Activated CD8-positive, alpha-beta T cell treated with anti-CD3 and anti-CD28 coated beads, Interleukin-2, amount 10 ng/mL, durations not matched to agents 7 days and 5 days (primary cell): ENCODE measurements at regions of chr2 and their contacts with region 1.

Region 1: GRCh38 chr2:70301344-70302194 is at the start of gene FAM136A:
- DNase-seq: peak; percentile 90
- ATAC-seq: peak; percentile 89
- H3K4me3 Mint-ChIP-seq: peak within 1 kb of the TSS; percentile 94
- H3K27ac Mint-ChIP-seq: peak within 1 kb of the TSS; percentile 98
- H3K4me1 Mint-ChIP-seq: peaks cover 41% of the 10 kb centered on the region
- H3K27me3 Mint-ChIP-seq: no peaks in the 10 kb centered on the region
- total RNA-seq, gene FAM136A: 45.5 to 51.0 TPM

Region 2: DNA sequence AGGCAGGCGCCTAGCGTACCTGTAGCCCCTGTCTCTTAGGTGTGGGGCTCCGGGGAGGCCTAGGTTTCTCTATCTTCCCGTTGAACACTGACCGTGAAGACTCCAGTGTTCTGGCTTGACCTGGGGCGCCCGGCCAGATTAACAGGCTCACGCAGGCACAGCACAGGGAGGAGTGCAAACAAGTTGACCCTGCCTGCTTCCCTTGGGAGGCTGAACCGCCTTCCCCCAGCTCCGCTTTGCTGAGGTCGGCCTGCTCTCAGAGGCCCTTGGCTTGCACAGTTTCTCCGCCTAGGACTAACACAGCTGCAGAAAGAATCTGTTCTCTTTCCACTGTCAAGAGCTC is 43.1 kb before region 1 on chr2:
- CTCF ChIA-PET with region 1: interaction called, 23 read pairs
- POLR2A ChIA-PET with region 1: interaction called, 6 read pairs
- DNase-seq: peak; percentile 26
- ATAC-seq: no peak
- H3K4me3 Mint-ChIP-seq: peak overlapping the region; percentile 79
- H3K27ac Mint-ChIP-seq: no peak overlapping the region
- H3K4me1 Mint-ChIP-seq: peaks cover 36% of the 10 kb centered on the region
- H3K27me3 Mint-ChIP-seq: no peaks in the 10 kb centered on the region

Region 3: GRCh38 chr2:70321370-70321769 is 19.8 kb after region 1 on chr2:
- CTCF ChIA-PET with region 1: interaction called, 13 read pairs
- POLR2A ChIA-PET with region 1: no interaction called
- DNase-seq: no peak
- ATAC-seq: no peak
- H3K4me3 Mint-ChIP-seq: no peak overlapping the region
- H3K27ac Mint-ChIP-seq: no peak overlapping the region
- H3K4me1 Mint-ChIP-seq: no peaks in the 10 kb centered on the region
- H3K27me3 Mint-ChIP-seq: peaks cover 27% of the 10 kb centered on the region

Region 4: DNA sequence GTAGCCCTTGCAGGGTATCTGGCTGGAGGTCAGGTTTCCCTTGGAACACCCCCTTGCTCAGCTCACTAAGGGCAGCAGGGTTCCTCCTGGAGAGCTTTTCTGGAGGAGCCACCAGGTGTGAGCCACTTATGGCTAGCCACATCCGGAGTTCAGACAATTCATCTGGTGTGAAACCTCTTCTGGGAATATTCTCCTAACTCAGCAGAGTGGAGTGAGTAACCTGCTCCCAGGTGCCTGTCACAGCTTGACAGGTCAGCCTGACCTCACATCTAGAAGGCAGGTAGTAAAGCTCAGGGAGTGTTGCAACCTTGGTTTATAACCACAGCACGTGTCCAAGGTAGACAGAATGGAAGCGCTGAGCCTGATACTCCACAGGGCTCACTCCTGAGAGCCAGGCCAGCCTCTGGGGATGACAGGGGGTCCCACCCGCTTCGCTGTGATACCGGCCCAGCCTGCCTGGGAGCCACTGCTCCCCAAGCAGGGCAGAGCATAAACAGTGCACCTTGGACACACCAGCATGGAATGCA is 314.7 kb after region 1 on chr2:
- CTCF ChIA-PET with region 1: interaction called, 79 read pairs
- POLR2A ChIA-PET with region 1: no interaction called
- DNase-seq: no peak
- ATAC-seq: no peak
- H3K4me3 Mint-ChIP-seq: no peak overlapping the region
- H3K27ac Mint-ChIP-seq: no peak overlapping the region
- H3K4me1 Mint-ChIP-seq: peaks cover 5% of the 10 kb centered on the region
- H3K27me3 Mint-ChIP-seq: peaks cover 16% of the 10 kb centered on the region

Region 5: DNA sequence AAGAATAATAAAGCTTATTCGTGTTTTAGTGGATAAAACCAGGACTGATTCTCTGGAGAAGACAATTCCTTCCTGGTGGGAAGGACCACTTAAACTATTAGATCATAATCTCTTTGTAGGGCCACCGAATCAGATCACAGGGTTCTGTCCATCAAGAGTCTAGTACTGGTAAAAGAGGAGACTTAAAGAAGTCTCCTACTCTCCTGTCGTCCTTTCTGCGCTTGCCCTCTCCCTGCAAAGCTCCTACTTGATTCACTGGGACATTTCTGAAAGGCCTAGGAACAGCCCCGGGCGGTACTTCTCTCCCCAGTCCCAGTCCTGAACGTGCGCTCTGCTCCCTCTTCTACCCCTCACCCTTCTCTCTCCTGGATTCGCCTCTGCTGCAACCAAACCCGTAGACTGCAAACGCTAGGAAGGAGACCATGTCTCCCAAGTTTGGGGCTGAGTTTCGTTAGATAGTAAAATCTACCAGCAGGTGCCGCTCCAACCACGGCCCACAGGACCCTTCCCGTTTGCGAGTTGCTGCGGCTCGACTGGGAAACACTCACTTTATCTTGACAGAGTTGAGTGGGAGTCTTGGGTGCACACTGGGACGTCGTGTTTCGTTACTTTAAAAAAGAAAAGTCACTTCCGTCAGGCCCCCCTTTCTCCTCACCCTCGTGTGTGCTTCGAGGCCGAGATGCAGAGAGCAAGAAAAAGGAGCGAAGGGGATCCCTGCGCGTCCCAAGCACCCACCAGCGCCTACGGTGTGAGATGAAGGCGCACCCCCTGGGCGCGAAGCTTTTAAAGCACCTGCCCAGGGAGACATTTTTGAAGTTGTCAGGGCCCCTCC is 488.0 kb after region 1 on chr2:
- CTCF ChIA-PET with region 1: interaction called, 14 read pairs
- POLR2A ChIA-PET with region 1: no interaction called
- DNase-seq: peak; percentile 79
- ATAC-seq: peak; percentile 91
- H3K4me3 Mint-ChIP-seq: peak overlapping the region; percentile 65
- H3K27ac Mint-ChIP-seq: no peak overlapping the region
- H3K4me1 Mint-ChIP-seq: peaks cover 5% of the 10 kb centered on the region
- H3K27me3 Mint-ChIP-seq: peaks cover 50% of the 10 kb centered on the region

Region 6: DNA sequence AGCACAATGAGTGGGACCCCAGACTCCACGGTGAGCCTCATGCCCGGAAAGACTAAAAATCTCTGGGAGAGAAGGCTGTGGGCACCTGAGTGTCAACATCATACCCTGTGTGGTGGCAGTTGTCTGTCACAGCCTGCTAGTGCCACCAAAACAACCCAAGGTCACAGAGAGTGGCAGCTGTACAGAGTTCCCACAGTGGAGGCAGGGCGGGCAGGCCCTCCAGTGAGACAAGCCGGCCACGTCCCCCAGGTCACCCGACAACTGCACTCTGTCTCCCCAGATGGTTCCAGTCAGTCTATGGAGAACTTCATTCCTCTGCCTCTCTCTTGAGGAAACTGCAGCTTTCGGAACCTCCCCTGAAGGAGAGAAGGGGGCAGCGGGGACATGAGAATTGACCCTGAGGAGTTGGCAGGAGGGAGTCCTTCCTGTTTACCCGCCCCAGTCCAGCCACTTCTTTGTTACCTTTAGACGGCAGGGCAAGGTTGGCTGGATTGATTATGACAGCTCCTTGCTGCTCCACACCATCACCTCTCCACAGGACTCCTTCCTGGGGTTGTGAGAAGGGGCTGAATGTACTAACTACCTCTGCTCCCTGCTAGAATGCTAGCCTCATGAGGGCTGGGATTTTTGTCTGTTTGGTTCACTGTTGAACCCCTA is 500.2 kb after region 1 on chr2:
- CTCF ChIA-PET with region 1: no interaction called
- POLR2A ChIA-PET with region 1: no interaction called
- DNase-seq: no peak
- ATAC-seq: no peak
- H3K4me3 Mint-ChIP-seq: no peak overlapping the region
- H3K27ac Mint-ChIP-seq: no peak overlapping the region
- H3K4me1 Mint-ChIP-seq: no peaks in the 10 kb centered on the region
- H3K27me3 Mint-ChIP-seq: peaks cover 19% of the 10 kb centered on the region